GM12878 (cell line): ENCODE measurements at regions of chr15 and their contacts with region 1.

Region 1: GRCh38 chr15:44971036-44971435 is 14.5 kb downstream of the TERB2 start:
- DNase-seq: no peak
- ATAC-seq: no peak
- H3K4me3 ChIP-seq: no peak overlapping the region
- H3K27ac ChIP-seq: no peak overlapping the region
- H3K4me1 ChIP-seq: no peaks in the 10 kb centered on the region
- H3K27me3 ChIP-seq: no peaks in the 10 kb centered on the region
- CTCF ChIP-seq: no peak
- EP300 ChIP-seq: no peak
- POLR2A ChIP-seq: no peak
- RAD21 ChIP-seq: no peak

Region 2: GRCh38 chr15:44738340-44738984 is 232.6 kb before region 1 on chr15:
- CTCF ChIA-PET with region 1: no interaction called
- POLR2A ChIA-PET with region 1: no interaction called
- RAD21 ChIA-PET with region 1: no interaction called
- SMC1A ChIA-PET with region 1: no interaction called
- in situ Hi-C with region 1: no loop called
- intact Hi-C with region 1: no loop called
- DNase-seq: no peak
- ATAC-seq: no peak
- H3K4me3 ChIP-seq: no peak overlapping the region
- H3K27ac ChIP-seq: no peak overlapping the region
- H3K4me1 ChIP-seq: peaks cover 22% of the 10 kb centered on the region
- H3K27me3 ChIP-seq: no peaks in the 10 kb centered on the region
- CTCF ChIP-seq: peak; percentile 55 to 80 (median 70); a peak in 5 of 6 replicates
- EP300 ChIP-seq: no peak
- POLR2A ChIP-seq: no peak
- RAD21 ChIP-seq: peak; percentile 87

Region 3: DNA sequence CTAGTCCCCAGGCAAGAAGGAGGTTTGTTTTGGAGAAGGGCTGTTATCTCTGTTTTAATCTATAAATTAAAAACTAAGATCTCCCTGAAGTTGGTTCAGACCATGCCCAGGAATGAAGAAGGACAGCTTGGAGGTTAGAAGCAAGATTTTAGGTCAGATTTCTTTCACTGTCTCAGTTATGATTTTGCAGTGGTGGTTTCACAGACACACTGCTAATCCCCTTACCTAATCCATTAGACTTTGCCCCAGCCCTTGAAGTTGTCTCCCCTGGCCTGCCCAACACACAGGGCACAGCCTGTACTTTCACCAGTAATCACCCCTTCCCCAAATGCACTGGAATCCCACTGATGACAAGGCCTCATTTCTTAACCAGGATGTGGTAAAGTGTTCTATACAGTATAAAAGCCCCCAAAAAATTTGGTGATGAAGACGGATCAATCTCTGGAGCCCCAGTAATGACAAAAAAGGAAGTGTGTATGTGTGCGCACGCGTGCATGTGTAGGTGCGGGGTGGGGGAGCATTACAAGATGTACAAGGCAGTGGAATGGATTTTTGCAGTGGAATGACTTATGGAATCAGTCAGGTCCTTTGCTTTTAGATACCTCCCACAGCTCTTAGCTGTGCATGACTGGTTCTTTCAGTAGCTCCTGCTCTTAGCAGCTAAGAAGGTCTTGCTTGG is 87.7 kb before region 1 on chr15:
- CTCF ChIA-PET with region 1: no interaction called
- POLR2A ChIA-PET with region 1: no interaction called
- RAD21 ChIA-PET with region 1: no interaction called
- SMC1A ChIA-PET with region 1: no interaction called
- in situ Hi-C with region 1: no loop called
- intact Hi-C with region 1: no loop called
- DNase-seq: no peak
- ATAC-seq: peak; percentile 67
- H3K4me3 ChIP-seq: peak overlapping the region; percentile 76; the same call in 1 of the 2 replicates
- H3K27ac ChIP-seq: peak overlapping the region; percentile 82
- H3K4me1 ChIP-seq: peaks cover 16% of the 10 kb centered on the region
- H3K27me3 ChIP-seq: no peaks in the 10 kb centered on the region
- CTCF ChIP-seq: no peak
- EP300 ChIP-seq: no peak
- POLR2A ChIP-seq: no peak
- RAD21 ChIP-seq: no peak

Region 4: GRCh38 chr15:45037936-45038335 is 66.9 kb after region 1 on chr15:
- CTCF ChIA-PET with region 1: interaction called, 54 read pairs
- POLR2A ChIA-PET with region 1: interaction called, 5 read pairs
- RAD21 ChIA-PET with region 1: interaction called, 11 read pairs
- SMC1A ChIA-PET with region 1: interaction called, 10 read pairs
- in situ Hi-C with region 1: no loop called
- intact Hi-C with region 1: loop called (anchors 2 kb)
- DNase-seq: no peak
- ATAC-seq: no peak
- H3K4me3 ChIP-seq: no peak overlapping the region
- H3K27ac ChIP-seq: no peak overlapping the region
- H3K4me1 ChIP-seq: no peaks in the 10 kb centered on the region; the same call in 1 of the 2 replicates
- H3K27me3 ChIP-seq: no peaks in the 10 kb centered on the region
- CTCF ChIP-seq: no peak
- EP300 ChIP-seq: no peak
- POLR2A ChIP-seq: no peak
- RAD21 ChIP-seq: no peak

Region 5: DNA sequence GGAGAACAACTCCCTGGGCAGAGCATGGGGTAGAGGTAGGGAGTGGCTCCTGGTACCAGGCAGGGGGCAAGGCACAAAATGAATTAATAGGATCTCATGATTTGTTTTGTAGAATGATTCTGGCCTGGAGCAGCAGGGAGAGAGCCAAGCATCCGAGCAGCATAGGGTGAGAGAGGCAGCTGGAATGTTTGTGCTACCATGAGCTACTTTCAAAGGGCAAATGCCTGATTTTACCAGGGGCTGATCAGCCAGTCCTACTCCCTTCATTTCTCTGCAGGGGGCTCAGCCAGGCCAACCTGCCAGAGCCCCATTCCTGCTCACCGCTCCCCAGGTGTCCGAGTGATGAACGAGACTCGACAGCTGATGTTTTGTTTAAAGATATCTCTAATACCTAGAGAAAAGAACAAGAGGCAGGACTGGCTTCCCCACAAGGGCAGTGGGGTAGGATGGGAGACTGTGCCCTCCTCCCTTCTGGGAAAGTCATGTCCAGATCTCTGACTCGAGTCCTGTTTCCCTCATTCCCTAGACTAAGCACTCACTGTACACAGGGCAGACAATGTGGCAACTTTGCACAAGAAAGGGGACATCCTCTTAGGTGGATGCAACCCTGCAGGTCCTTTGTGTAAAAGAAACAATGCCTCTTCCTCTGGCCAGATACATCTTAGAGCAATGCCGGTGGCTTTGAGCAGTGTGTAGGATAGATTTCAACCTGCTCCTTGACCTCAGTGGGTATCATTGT is 130.0 kb after region 1 on chr15:
- CTCF ChIA-PET with region 1: no interaction called
- POLR2A ChIA-PET with region 1: no interaction called
- RAD21 ChIA-PET with region 1: no interaction called
- SMC1A ChIA-PET with region 1: no interaction called
- in situ Hi-C with region 1: no loop called
- intact Hi-C with region 1: no loop called
- DNase-seq: no peak
- ATAC-seq: no peak
- H3K4me3 ChIP-seq: no peak overlapping the region
- H3K27ac ChIP-seq: no peak overlapping the region
- H3K4me1 ChIP-seq: no peaks in the 10 kb centered on the region
- H3K27me3 ChIP-seq: no peaks in the 10 kb centered on the region; a peak in 2 of 4 replicates
- CTCF ChIP-seq: no peak
- EP300 ChIP-seq: no peak
- POLR2A ChIP-seq: no peak
- RAD21 ChIP-seq: no peak

Region 6: DNA sequence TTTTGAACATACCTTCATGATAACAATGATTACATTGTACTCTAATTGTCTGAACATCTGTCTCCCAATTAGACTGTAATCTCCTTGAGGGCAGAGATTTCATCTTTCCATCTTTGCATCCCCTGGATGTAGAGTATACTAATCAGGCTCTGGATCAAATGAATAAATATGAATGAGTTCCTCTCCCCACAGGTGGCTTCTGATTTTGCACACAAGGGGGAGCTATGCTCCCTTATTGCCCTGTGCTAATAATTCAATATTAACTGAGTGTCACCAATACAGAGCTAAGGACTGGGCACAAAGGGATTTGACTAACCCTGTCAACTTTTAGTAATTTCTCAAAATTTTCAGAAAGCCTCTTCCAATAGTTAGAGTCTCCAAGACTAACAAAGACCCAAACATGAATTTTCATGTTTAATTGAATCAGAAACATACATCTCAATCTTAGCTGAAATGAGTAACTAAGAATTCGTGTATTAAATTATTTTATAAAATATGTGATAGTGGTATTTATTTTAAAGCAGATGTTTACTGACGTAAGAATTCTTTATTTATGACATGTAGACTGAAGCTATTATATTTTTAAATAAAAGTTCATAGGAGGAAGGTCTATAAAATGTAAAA is 155.6 kb after region 1 on chr15:
- CTCF ChIA-PET with region 1: no interaction called
- POLR2A ChIA-PET with region 1: no interaction called
- RAD21 ChIA-PET with region 1: no interaction called
- SMC1A ChIA-PET with region 1: no interaction called
- in situ Hi-C with region 1: no loop called
- intact Hi-C with region 1: loop called (anchors 10 kb)
- DNase-seq: no peak
- ATAC-seq: peak; percentile 89
- H3K4me3 ChIP-seq: no peak overlapping the region
- H3K27ac ChIP-seq: no peak overlapping the region
- H3K4me1 ChIP-seq: no peaks in the 10 kb centered on the region
- H3K27me3 ChIP-seq: peaks cover 4 to 8% of the 10 kb centered on the region in 2 experiments
- CTCF ChIP-seq: peak; percentile 64 to 72 (median 67)
- EP300 ChIP-seq: no peak
- POLR2A ChIP-seq: no peak
- RAD21 ChIP-seq: peak; percentile 45